ENCODE measurements at regions of chr4 and their contacts with region 1.

Region 1: GRCh38 chr4:48269861-48270522 is 354 bp upstream of the TEC start:
- DNase-seq: peak; percentile 74
- ATAC-seq: peak; percentile 89
- H3K4me3 ChIP-seq: peak overlapping the region; percentile 65
- H3K27ac ChIP-seq: peak overlapping the region; percentile 88
- H3K4me1 ChIP-seq: peaks cover 18% of the 10 kb centered on the region
- H3K27me3 ChIP-seq: no peaks in the 10 kb centered on the region
- CTCF ChIP-seq: peak in 2 of 3 experiments; percentile 16 to 31; a peak in 2 of 6 replicates
- EP300 ChIP-seq: peak in 1 of 2 experiments; percentile 40; a peak in 1 of 4 replicates
- POLR2A ChIP-seq: peak; percentile 76
- RAD21 ChIP-seq: peak; percentile 42

Region 2: DNA sequence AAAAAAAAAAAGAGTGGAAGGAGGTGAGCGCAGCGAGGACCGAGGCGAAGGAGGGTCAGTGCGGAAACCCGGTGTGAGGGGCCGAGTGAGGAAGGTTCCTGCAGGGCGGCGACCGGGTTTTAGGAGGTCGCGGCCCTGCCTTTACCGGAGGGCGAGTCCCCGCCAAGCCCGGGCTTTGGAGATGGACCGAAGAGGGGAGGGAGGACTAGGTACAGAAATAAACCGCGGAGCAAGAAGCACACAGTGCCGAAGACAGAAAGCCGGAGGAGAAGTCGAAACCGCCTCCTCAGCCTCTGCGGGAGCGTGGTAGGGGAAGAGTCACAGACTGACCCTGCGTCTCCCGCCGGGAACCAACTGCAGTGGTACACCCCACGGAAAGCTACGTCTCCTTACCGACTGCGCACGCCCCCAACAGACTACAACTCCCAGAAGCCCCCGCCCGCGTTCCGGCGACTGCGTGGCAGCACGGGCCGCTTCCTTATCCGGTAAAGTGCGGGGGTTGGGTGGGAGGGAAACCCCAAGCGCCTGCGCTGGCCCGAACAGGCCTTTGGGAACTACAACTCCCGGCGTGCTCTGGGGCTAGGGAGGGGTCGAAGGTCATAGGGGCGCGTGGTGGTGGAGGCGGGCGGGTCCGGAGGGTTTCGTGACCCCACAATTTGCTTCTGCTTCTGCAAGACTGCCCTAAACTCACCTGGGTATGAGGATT is 355.6 kb before region 1 on chr4 and contains the start of gene NFXL1:
- CTCF ChIA-PET with region 1: no interaction called
- POLR2A ChIA-PET with region 1: no interaction called
- RAD21 ChIA-PET with region 1: no interaction called
- SMC1A ChIA-PET with region 1: interaction called, 4 read pairs
- in situ Hi-C with region 1: no loop called
- intact Hi-C with region 1: loop called (anchors 5 kb)
- DNase-seq: peak; percentile 79
- ATAC-seq: peak; percentile 97
- H3K4me3 ChIP-seq: peak within 1 kb of the TSS; percentile 78
- H3K27ac ChIP-seq: peak within 1 kb of the TSS; percentile 61
- H3K4me1 ChIP-seq: no peaks in the 10 kb centered on the region; the same call in 1 of the 2 replicates
- H3K27me3 ChIP-seq: no peaks in the 10 kb centered on the region
- CTCF ChIP-seq: no peak
- EP300 ChIP-seq: no peak
- POLR2A ChIP-seq: peak; percentile 91
- RAD21 ChIP-seq: no peak
- polyA plus RNA-seq, gene NFXL1: 8.8 to 10.0 TPM

Region 3: DNA sequence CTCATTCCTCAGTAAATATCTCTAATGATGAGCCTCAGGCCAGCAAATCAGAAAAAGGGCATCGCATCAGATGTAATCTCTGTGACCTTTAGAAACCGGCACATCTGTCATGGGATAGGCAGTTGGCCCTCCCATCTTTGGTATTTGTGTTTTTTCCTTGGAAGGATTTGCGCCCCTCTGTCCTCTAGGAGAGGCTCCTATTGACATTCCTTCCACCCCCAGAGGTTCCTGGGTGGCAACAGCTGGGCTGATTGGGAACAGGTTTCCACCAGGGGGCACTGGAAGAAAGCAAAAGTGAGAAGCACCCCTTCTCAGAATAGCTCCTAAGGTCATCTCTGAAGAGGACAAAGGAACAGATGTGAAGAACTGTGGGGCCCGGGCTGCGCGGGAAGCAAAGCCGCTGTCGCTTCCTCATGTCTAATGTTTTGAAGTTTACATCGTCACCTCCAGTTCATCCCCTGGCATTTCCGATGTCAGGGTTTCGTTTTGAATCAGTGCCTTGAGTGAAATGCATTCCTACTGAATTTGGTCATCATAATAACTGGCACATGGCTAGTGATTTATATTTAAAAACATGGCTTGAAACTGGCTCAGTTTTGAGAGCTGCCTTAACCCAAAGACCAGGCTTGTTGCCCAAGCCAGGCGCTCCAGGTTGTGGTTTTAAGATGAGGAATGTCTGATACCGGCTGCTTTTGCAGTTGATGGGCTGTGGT is 142.2 kb before region 1 on chr4:
- CTCF ChIA-PET with region 1: interaction called, 58 read pairs
- POLR2A ChIA-PET with region 1: interaction called, 3 read pairs
- RAD21 ChIA-PET with region 1: interaction called, 39 read pairs
- SMC1A ChIA-PET with region 1: interaction called, 41 read pairs
- in situ Hi-C with region 1: no loop called
- intact Hi-C with region 1: loop called (anchors 1 kb)
- DNase-seq: peak; percentile 81
- ATAC-seq: peak; percentile 92
- H3K4me3 ChIP-seq: no peak overlapping the region
- H3K27ac ChIP-seq: no peak overlapping the region
- H3K4me1 ChIP-seq: peaks cover 15% of the 10 kb centered on the region
- H3K27me3 ChIP-seq: no peaks in the 10 kb centered on the region
- CTCF ChIP-seq: peak; percentile 64 to 71 (median 66)
- EP300 ChIP-seq: no peak
- POLR2A ChIP-seq: 0 out of 2 replicates have a peak, but pooled peaks have one; percentile 32
- RAD21 ChIP-seq: peak; percentile 85

Region 4: GRCh38 chr4:48195374-48195773 is 74.6 kb before region 1 on chr4:
- CTCF ChIA-PET with region 1: interaction called, 17 read pairs
- POLR2A ChIA-PET with region 1: interaction called, 7 read pairs
- RAD21 ChIA-PET with region 1: interaction called, 9 read pairs
- SMC1A ChIA-PET with region 1: interaction called, 20 read pairs
- in situ Hi-C with region 1: no loop called
- intact Hi-C with region 1: loop called (anchors 2 kb)
- DNase-seq: no peak
- ATAC-seq: peak; percentile 48
- H3K4me3 ChIP-seq: peak overlapping the region; percentile 81
- H3K27ac ChIP-seq: peak overlapping the region; percentile 86
- H3K4me1 ChIP-seq: peaks cover 46% of the 10 kb centered on the region
- H3K27me3 ChIP-seq: no peaks in the 10 kb centered on the region
- CTCF ChIP-seq: no peak
- EP300 ChIP-seq: peak in 1 of 2 experiments; percentile 20; a peak in 1 of 4 replicates
- POLR2A ChIP-seq: no peak
- RAD21 ChIP-seq: no peak

Region 5: DNA sequence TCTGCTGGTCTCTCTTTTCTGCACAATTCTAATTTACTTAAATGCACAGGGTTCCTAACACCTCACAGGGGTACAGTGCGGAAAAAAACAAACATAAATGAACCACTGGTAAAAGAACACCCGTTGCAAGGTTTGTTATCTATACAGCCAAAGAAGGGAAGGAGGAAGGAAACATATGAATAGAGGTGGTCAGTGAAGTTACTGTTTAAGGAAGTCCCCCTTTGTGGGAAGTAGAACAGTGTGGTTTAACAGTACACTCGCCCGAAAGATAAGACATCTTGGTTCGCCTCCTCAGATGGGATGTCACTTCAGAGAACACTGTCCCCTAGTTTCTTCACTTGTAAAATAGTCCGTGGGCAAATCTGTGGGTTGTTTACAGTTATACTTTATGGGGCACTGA is 57.8 kb before region 1 on chr4:
- CTCF ChIA-PET with region 1: interaction called, 10 read pairs
- POLR2A ChIA-PET with region 1: interaction called, 9 read pairs
- RAD21 ChIA-PET with region 1: interaction called, 19 read pairs
- SMC1A ChIA-PET with region 1: interaction called, 23 read pairs
- in situ Hi-C with region 1: no loop called
- intact Hi-C with region 1: loop called (anchors 2 kb)
- DNase-seq: no peak
- ATAC-seq: peak; percentile 85
- H3K4me3 ChIP-seq: peak overlapping the region; percentile 54; the same call in 1 of the 2 replicates
- H3K27ac ChIP-seq: peak overlapping the region; percentile 90
- H3K4me1 ChIP-seq: peaks cover 43% of the 10 kb centered on the region
- H3K27me3 ChIP-seq: no peaks in the 10 kb centered on the region
- CTCF ChIP-seq: no peak
- EP300 ChIP-seq: peak; percentile 60 to 72; a peak in 3 of 4 replicates
- POLR2A ChIP-seq: peak; percentile 37; the same call in 1 of the 2 replicates
- RAD21 ChIP-seq: no peak

Region 6: DNA sequence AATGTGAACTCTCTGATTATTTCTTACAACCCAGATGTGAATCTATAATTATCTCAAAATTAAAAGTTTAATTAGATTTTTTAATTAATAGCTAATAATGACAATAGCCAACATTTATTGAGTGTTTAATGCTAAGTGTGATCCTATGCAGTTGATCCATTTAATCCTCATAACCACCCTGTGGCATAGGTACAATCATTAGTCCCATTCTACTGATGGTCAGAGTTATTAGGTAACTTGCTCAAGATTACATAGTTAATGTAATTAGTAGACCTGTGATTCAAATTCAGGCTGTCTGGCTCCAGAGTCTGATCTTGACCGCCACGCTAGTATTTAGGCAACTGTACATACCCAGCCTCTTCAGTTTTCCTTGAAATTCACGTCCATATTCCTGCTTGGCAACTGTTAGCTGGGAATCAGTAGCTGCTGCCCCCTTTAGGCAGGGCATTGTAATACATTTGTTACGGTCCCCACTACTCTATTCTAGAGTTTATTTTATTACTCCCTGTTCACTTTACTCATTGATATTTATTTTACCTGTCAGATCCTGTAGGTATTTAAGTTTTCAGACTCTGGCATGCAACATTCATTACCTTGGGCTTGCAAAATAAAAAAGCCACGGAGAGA is 20.3 kb after region 1 on chr4:
- CTCF ChIA-PET with region 1: interaction called, 33 read pairs
- POLR2A ChIA-PET with region 1: no interaction called
- RAD21 ChIA-PET with region 1: interaction called, 5 read pairs
- SMC1A ChIA-PET with region 1: interaction called, 3 read pairs
- in situ Hi-C with region 1: no loop called
- intact Hi-C with region 1: no loop called
- DNase-seq: no peak
- ATAC-seq: peak; percentile 82
- H3K4me3 ChIP-seq: no peak overlapping the region
- H3K27ac ChIP-seq: no peak overlapping the region
- H3K4me1 ChIP-seq: no peaks in the 10 kb centered on the region
- H3K27me3 ChIP-seq: no peaks in the 10 kb centered on the region
- CTCF ChIP-seq: peak; percentile 64 to 76 (median 66)
- EP300 ChIP-seq: no peak
- POLR2A ChIP-seq: no peak
- RAD21 ChIP-seq: peak; percentile 65

Measured in GM12878 (cell line).